PC-9 (cell line): ENCODE measurements at regions of chr9 and their contacts with region 1.

Region 1: GRCh38 chr9:37943329-37944265 is 39.7 kb upstream of the SLC25A51 start:
- DNase-seq: peak; percentile 55 to 90
- H3K4me3 ChIP-seq: no peak overlapping the region
- H3K27ac ChIP-seq: peak overlapping the region; percentile 68
- H3K4me1 ChIP-seq: peaks cover 66% of the 10 kb centered on the region
- H3K27me3 ChIP-seq: no peaks in the 10 kb centered on the region
- CTCF ChIP-seq: no peak

Region 2: DNA sequence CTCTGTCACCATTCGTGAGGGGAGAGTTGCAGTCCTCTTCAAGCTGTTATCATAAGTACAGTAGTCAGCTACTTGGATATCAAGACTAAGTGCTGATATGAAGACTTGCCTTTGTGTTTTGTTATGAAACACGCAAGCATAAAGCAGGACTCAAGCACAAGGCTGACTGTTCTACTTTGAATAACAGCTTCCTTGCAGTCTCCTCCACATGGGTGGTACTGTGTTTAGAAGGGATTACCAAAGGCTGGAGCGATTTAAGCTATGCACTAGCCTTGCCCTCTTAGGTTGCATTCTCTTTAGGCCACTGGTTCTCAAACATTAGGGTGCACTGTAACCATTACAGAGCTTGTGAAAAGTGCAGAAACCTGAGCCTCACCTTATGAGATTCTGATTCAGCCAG is 81.1 kb before region 1 on chr9:
- CTCF ChIA-PET with region 1: no interaction called
- POLR2A ChIA-PET with region 1: no interaction called
- intact Hi-C with region 1: no loop called
- DNase-seq: no peak
- H3K4me3 ChIP-seq: no peak overlapping the region
- H3K27ac ChIP-seq: no peak overlapping the region
- H3K4me1 ChIP-seq: no peaks in the 10 kb centered on the region
- H3K27me3 ChIP-seq: no peaks in the 10 kb centered on the region
- CTCF ChIP-seq: no peak

Region 3: DNA sequence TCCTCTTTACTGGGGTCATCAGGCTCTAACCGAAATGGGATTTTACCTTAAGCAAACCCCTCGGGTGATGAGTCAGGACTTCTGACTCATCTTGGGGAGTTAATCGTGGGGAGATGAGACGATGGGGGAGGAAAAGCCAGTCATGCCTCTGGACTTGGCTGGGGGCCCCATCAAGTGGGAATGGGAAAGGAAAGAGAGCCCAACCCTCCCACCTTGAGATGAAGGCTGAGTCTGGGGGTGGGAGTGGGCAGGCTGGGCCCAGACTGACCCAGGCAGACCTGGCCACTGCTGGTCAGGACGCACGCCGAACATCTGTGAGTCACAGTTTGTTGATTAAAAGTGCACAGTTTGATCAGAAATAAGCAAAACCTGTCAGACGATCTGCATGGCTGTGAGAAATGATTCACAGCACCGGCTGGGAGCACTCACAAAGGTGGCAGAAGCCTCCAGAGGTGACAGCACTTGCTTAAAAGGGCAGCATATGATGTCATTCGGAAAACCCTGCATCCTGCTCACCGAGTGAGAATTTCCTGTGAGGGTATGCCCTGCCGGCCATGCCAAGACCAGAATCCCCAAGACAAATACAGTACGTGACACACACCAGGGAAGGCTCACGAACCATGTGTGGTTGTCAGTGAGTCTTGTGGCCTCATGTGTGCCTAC is 10.3 kb after region 1 on chr9:
- CTCF ChIA-PET with region 1: no interaction called
- POLR2A ChIA-PET with region 1: no interaction called
- intact Hi-C with region 1: loop called (anchors 1 kb)
- DNase-seq: peak; percentile 70 to 95
- H3K4me3 ChIP-seq: no peak overlapping the region
- H3K27ac ChIP-seq: peak overlapping the region; percentile 76
- H3K4me1 ChIP-seq: peaks cover 29% of the 10 kb centered on the region
- H3K27me3 ChIP-seq: no peaks in the 10 kb centered on the region
- CTCF ChIP-seq: no peak

Region 4: GRCh38 chr9:37963936-37964739 is 20.5 kb after region 1 on chr9:
- CTCF ChIA-PET with region 1: no interaction called
- POLR2A ChIA-PET with region 1: no interaction called
- intact Hi-C with region 1: loop called (anchors 2 kb)
- DNase-seq: peak; percentile 60 to 85
- H3K4me3 ChIP-seq: peak overlapping the region; percentile 4; the same call in 1 of the 2 replicates
- H3K27ac ChIP-seq: peak overlapping the region; percentile 87
- H3K4me1 ChIP-seq: peaks cover 61% of the 10 kb centered on the region
- H3K27me3 ChIP-seq: no peaks in the 10 kb centered on the region
- CTCF ChIP-seq: no peak

Region 5: GRCh38 chr9:38008168-38009034 is 64.8 kb after region 1 on chr9:
- CTCF ChIA-PET with region 1: no interaction called
- POLR2A ChIA-PET with region 1: no interaction called
- intact Hi-C with region 1: loop called (anchors 1 kb)
- DNase-seq: peak; percentile 74 to 96
- H3K4me3 ChIP-seq: no peak overlapping the region
- H3K27ac ChIP-seq: peak overlapping the region; percentile 69
- H3K4me1 ChIP-seq: peaks cover 45% of the 10 kb centered on the region
- H3K27me3 ChIP-seq: no peaks in the 10 kb centered on the region
- CTCF ChIP-seq: no peak